Activated CD8-positive, alpha-beta T cell treated with anti-CD3 and anti-CD28 coated beads for 36 hours (primary cell): ENCODE measurements at regions of chrX and their contacts with region 1.

Region 1: DNA sequence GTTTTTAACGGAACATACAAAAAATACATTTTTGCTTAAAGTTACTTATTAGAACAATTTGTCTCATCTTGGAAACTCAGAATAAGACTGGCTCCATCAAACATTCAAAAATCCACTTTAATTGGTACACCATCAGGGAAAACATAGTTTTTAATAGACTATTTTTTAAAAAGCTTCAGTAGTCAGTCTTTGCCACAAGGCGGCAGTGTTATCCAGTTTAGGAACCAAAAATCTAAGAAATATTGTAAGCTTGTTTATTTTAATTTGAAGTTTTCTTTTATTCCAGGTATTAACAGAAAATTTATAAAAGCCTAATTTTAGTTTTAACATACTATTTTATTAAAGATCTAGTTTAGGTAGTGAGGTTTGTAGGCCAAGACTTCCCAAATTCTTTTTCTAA is 107.7 kb downstream of the APOOL start:
- DNase-seq: peak; percentile 7
- ATAC-seq: no peak
- H3K4me3 Mint-ChIP-seq: no peak overlapping the region
- H3K27ac Mint-ChIP-seq: no peak overlapping the region
- H3K4me1 Mint-ChIP-seq: no peaks in the 10 kb centered on the region
- H3K27me3 Mint-ChIP-seq: no peaks in the 10 kb centered on the region
- CTCF ChIP-seq: peak; percentile 30

Region 2: DNA sequence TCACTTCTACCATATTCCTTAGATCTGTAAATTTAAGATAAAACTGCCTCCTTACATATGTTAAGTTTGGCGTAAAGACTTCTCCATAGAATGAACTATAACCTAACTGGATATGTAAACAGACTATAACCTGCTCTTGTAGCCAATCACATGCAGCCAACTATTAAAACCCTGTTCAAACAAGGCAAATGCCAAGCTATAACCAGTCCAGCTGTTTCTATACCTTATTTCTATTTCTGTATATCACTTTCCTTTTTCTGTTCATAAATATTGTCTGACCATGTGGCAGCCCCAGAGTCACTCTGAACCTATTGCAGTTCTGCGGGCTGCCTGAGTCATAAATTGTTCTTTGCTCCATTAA is 280.5 kb after region 1 on chrX:
- CTCF ChIA-PET with region 1: no interaction called
- POLR2A ChIA-PET with region 1: no interaction called
- intact Hi-C with region 1: no loop called
- DNase-seq: no peak
- ATAC-seq: no peak
- H3K4me3 Mint-ChIP-seq: no peak overlapping the region
- H3K27ac Mint-ChIP-seq: no peak overlapping the region
- H3K4me1 Mint-ChIP-seq: no peaks in the 10 kb centered on the region
- H3K27me3 Mint-ChIP-seq: no peaks in the 10 kb centered on the region
- CTCF ChIP-seq: no peak

Region 3: DNA sequence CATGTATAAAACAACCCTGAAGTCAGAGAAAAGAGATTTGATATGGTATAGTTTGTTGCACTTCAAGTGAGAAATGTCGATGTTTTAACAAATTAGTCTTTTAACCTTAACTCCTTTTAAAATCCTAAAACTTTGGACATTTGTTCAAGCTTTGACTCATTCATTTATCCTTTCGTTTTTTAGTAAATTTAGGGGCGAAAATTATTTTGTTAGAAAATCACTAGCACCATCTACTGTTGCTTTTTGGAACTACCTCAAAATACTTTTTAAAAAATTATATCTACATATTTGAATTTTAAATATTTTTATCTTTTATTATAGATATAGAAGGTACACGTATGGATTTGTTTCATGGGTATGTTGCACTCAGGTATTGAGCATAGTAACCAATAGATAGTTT is 433.3 kb after region 1 on chrX:
- CTCF ChIA-PET with region 1: no interaction called
- POLR2A ChIA-PET with region 1: no interaction called
- intact Hi-C with region 1: loop called (anchors 10 kb)
- DNase-seq: no peak
- ATAC-seq: no peak
- H3K4me3 Mint-ChIP-seq: no peak overlapping the region
- H3K27ac Mint-ChIP-seq: no peak overlapping the region
- H3K4me1 Mint-ChIP-seq: no peaks in the 10 kb centered on the region
- H3K27me3 Mint-ChIP-seq: no peaks in the 10 kb centered on the region
- CTCF ChIP-seq: peak; percentile 42